ENCODE measurements at regions of chr22 and their contacts with region 1.

Region 1: DNA sequence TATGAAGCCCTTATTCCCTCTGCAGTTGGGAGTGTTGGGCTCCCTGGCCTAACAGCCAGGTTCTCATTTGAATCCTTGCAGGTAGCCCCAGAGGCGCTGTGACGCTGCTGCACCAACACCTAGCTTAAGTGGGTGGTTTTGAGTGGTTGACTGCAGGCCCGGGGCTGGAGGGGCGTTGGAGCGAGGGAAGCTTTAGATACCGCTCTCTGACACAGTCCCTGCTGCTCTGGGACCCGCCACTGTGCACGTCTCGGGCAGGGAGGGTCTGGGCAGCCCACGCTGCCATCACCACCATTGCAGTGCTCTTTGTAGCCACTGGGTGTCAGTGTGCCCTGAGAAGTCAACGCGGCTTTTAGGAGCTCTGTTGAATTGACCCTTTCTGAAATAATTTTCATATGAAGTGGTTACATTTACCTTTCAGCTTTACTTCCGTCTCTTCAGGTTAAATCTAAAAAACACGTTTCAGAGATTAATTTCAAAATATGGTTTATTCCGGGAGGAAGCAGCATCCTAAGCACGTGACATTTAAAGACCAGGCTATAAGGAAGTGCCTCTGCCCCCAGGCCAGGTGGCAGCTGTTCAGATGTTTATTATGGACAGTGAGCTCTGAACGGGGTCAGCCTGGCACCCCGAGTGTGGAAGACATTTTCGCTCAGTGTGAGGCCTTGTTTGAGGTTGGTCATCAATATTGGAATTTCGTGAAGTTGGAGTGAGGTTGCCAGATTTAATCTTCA is 30.9 kb upstream of the PARVB start:
- DNase-seq: no peak
- H3K4me3 ChIP-seq: no peak overlapping the region
- H3K27ac ChIP-seq: no peak overlapping the region
- H3K4me1 ChIP-seq: no peaks in the 10 kb centered on the region
- H3K27me3 ChIP-seq: no peaks in the 10 kb centered on the region
- CTCF ChIP-seq: peak; percentile 75 to 93 (median 83)
- POLR2A ChIP-seq: no peak

Region 2: DNA sequence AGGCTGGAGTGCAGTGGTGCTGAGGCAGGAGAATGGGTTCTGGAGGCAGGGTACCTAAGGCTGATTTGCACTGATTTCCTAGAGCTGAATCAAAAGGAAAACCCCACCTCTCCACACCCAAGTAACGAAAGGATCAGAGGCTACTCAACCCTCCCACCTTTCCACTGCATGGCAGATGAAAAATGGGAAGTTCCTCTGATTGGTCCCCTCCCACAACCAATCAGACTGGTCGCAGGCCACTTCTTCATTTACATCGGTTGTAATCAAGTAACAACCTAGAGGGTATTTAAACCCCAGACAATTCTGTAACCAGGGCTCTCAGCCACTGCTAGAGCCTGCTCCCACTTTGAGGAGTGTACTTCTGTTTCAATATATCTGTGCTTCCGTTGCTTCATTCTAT is 12.3 kb after region 1 on chr22:
- intact Hi-C with region 1: no loop called
- DNase-seq: no peak
- H3K4me3 ChIP-seq: no peak overlapping the region
- H3K27ac ChIP-seq: no peak overlapping the region
- H3K4me1 ChIP-seq: no peaks in the 10 kb centered on the region
- H3K27me3 ChIP-seq: no peaks in the 10 kb centered on the region
- CTCF ChIP-seq: no peak
- POLR2A ChIP-seq: no peak

Region 3: GRCh38 chr22:44430716-44431115 is 437.5 kb after region 1 on chr22:
- intact Hi-C with region 1: loop called (anchors 5 kb)
- DNase-seq: no peak
- H3K4me3 ChIP-seq: no peak overlapping the region
- H3K27ac ChIP-seq: no peak overlapping the region
- H3K4me1 ChIP-seq: no peaks in the 10 kb centered on the region
- H3K27me3 ChIP-seq: peaks cover 0 to 15% of the 10 kb centered on the region in 2 donors
- CTCF ChIP-seq: no peak
- POLR2A ChIP-seq: no peak

Region 4: GRCh38 chr22:44625981-44626687 is 632.9 kb after region 1 on chr22:
- intact Hi-C with region 1: loop called (anchors 10 kb)
- DNase-seq: peak; percentile 42 to 74
- H3K4me3 ChIP-seq: no peak overlapping the region
- H3K27ac ChIP-seq: no peak overlapping the region
- H3K4me1 ChIP-seq: no peaks in the 10 kb centered on the region
- H3K27me3 ChIP-seq: peaks cover 0 to 38% of the 10 kb centered on the region in 2 donors
- CTCF ChIP-seq: peak; percentile 98 to 100 (median 99)
- POLR2A ChIP-seq: no peak